Heart right ventricle (tissue), 16 donors: ENCODE measurements at regions of chr21 and their contacts with region 1.

Region 1: DNA sequence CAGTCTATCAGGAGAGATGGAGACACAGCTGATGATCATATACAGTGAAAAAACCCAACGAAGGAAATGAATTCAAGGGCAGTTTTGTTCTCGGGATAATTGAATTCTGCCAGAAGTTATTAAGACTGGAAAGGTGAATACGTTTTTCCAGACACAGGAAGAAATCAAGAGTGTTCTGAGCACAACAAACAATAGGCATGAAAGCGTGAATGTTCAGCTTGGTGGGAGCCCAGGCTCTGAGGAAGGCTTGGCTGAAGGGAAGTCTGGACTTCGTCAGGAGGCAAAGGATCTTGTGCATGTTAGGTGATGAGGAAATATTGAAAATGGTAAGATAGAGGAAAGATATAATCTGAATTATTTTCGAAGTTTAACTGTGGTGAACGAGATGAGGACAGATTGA is 50.4 kb downstream of the CYYR1 start:
- DNase-seq: no peak
- ATAC-seq: peak in 3 of 8 donors; percentile 50 to 62 (median 62)
- H3K4me3 ChIP-seq: no peak overlapping the region
- H3K27ac ChIP-seq: peak overlapping the region in 2 of 10 donors; percentile 2 to 56
- H3K4me1 ChIP-seq: peaks cover 0 to 15% (median 0%) of the 10 kb centered on the region in 9 donors
- H3K27me3 ChIP-seq: no peaks in the 10 kb centered on the region
- CTCF ChIP-seq: no peak

Region 2: GRCh38 chr21:26099610-26100219 is 423.0 kb before region 1 on chr21:
- intact Hi-C with region 1: no loop called
- DNase-seq: no peak
- ATAC-seq: no peak
- H3K4me3 ChIP-seq: no peak overlapping the region
- H3K27ac ChIP-seq: no peak overlapping the region
- H3K4me1 ChIP-seq: peaks cover 0 to 22% (median 0%) of the 10 kb centered on the region in 9 donors
- H3K27me3 ChIP-seq: no peaks in the 10 kb centered on the region
- CTCF ChIP-seq: no peak

Region 3: GRCh38 chr21:26495283-26495845 is 27.3 kb before region 1 on chr21:
- intact Hi-C with region 1: loop called in 1 of 10 experiments (anchors 2 kb)
- DNase-seq: no peak
- ATAC-seq: no peak
- H3K4me3 ChIP-seq: no peak overlapping the region
- H3K27ac ChIP-seq: no peak overlapping the region
- H3K4me1 ChIP-seq: peaks cover 0 to 4% (median 0%) of the 10 kb centered on the region in 9 donors
- H3K27me3 ChIP-seq: no peaks in the 10 kb centered on the region
- CTCF ChIP-seq: no peak